B cell (primary cell): ENCODE measurements at regions of chr11 and their contacts with region 1.

Region 1: DNA sequence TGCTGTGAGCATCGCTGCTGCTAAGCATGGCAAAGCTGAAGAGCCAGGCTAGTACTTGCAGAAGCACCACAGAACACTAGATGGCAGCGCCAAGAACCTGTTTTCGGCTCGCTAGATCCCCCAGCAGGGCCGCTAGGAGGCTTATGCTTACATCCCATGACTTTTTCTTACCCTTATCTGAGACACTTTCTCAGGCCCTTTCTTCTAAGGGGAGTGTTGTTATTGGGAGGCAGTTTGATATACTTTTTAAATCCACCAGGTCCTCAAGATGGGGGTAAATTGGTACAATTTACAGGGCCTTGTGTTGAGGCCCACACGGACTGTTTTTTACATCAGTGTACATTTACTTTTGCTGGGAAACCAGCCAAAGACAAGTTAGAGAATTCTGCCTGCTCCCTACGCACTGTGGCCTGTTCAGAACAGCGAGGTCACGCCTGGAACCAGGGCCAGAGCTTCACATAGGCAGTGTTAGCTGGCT is 4.0 kb downstream of the TRIM6 start:
- DNase-seq: peak; percentile 77
- ATAC-seq: peak; percentile 92
- H3K4me3 ChIP-seq: no peak overlapping the region
- H3K4me3 Mint-ChIP-seq: no peak overlapping the region
- H3K27ac ChIP-seq: no peak overlapping the region
- H3K27ac Mint-ChIP-seq: no peak overlapping the region
- H3K4me1 ChIP-seq: peaks cover 9 to 11% of the 10 kb centered on the region in 2 donors
- H3K4me1 Mint-ChIP-seq: peaks cover 16% of the 10 kb centered on the region
- H3K27me3 ChIP-seq: peaks cover 0 to 3% (median 1%) of the 10 kb centered on the region in 4 experiments
- H3K27me3 Mint-ChIP-seq: peaks cover 3% of the 10 kb centered on the region
- CTCF ChIP-seq: peak; percentile 83

Region 2: GRCh38 chr11:5712507-5712906 is 112.1 kb after region 1 on chr11:
- CTCF ChIA-PET with region 1: interaction called, 26 read pairs
- POLR2A ChIA-PET with region 1: no interaction called
- intact Hi-C with region 1: loop called (anchors 1 kb)
- DNase-seq: peak; percentile 48
- ATAC-seq: peak; percentile 39
- H3K4me3 ChIP-seq: no peak overlapping the region
- H3K4me3 Mint-ChIP-seq: no peak overlapping the region
- H3K27ac ChIP-seq: no peak overlapping the region
- H3K27ac Mint-ChIP-seq: peak overlapping the region; percentile 66
- H3K4me1 ChIP-seq: no peaks in the 10 kb centered on the region
- H3K4me1 Mint-ChIP-seq: peaks cover 6% of the 10 kb centered on the region
- H3K27me3 ChIP-seq: no peaks in the 10 kb centered on the region
- H3K27me3 Mint-ChIP-seq: no peaks in the 10 kb centered on the region
- CTCF ChIP-seq: peak; percentile 73

Region 3: GRCh38 chr11:5808500-5809121 is 208.2 kb after region 1 on chr11 and contains the start of gene OR52N2:
- CTCF ChIA-PET with region 1: interaction called, 28 read pairs
- POLR2A ChIA-PET with region 1: no interaction called
- intact Hi-C with region 1: loop called (anchors 1 kb)
- DNase-seq: peak; percentile 84
- ATAC-seq: peak; percentile 91
- H3K4me3 ChIP-seq: peak within 1 kb of the TSS; percentile 52 to 66 (median 64)
- H3K4me3 Mint-ChIP-seq: peak within 1 kb of the TSS; percentile 91
- H3K27ac ChIP-seq: peak within 1 kb of the TSS in 1 of 2 donors; percentile 24
- H3K27ac Mint-ChIP-seq: no peak within 1 kb of the TSS
- H3K4me1 ChIP-seq: peaks cover 10 to 12% of the 10 kb centered on the region in 2 donors
- H3K4me1 Mint-ChIP-seq: peaks cover 12% of the 10 kb centered on the region
- H3K27me3 ChIP-seq: peaks cover 0 to 11% (median 9%) of the 10 kb centered on the region in 4 experiments
- H3K27me3 Mint-ChIP-seq: peaks cover 39% of the 10 kb centered on the region
- CTCF ChIP-seq: peak; percentile 93
- total RNA-seq, gene OR52N2: not detected in 2 replicates

Region 4: DNA sequence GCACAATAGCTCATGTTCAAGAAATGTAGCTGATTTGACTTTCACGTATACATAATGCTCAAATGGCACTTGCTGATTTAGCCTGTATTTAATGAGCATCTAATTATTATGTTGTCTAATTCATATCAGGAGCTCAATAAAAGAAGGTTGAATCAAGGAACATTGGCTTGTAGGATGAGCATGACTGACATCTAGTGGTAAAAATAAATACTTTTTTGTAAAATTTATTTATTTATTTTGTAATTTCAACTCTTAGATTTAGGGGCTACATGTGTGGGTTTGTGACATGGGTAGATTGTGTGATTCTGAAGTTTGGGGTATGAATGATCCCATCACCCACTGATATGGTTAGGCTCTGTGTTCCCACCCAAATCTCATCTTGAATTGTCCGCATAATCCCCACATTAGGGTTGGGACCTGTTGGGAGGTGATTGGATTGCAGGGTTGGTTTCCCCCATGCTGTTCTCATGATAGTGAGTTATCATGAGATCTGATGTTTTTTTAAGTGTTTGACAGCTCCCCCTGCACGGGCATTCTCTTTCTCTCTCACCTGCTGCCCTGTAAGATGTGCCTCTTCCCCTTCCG is 290.9 kb after region 1 on chr11:
- CTCF ChIA-PET with region 1: interaction called, 4 read pairs
- POLR2A ChIA-PET with region 1: no interaction called
- intact Hi-C with region 1: loop called (anchors 10 kb)
- DNase-seq: peak; percentile 20
- ATAC-seq: no peak
- H3K4me3 ChIP-seq: no peak overlapping the region
- H3K4me3 Mint-ChIP-seq: no peak overlapping the region
- H3K27ac ChIP-seq: no peak overlapping the region
- H3K27ac Mint-ChIP-seq: no peak overlapping the region
- H3K4me1 ChIP-seq: no peaks in the 10 kb centered on the region
- H3K4me1 Mint-ChIP-seq: no peaks in the 10 kb centered on the region
- H3K27me3 ChIP-seq: peaks cover 0 to 3% (median 0%) of the 10 kb centered on the region in 4 experiments
- H3K27me3 Mint-ChIP-seq: peaks cover 7% of the 10 kb centered on the region
- CTCF ChIP-seq: peak; percentile 72

Region 5: GRCh38 chr11:6353367-6353987 is 753.1 kb after region 1 on chr11:
- CTCF ChIA-PET with region 1: interaction called, 3 read pairs
- POLR2A ChIA-PET with region 1: no interaction called
- intact Hi-C with region 1: loop called (anchors 10 kb)
- DNase-seq: peak; percentile 71
- ATAC-seq: peak; percentile 64
- H3K4me3 ChIP-seq: no peak overlapping the region
- H3K4me3 Mint-ChIP-seq: no peak overlapping the region
- H3K27ac ChIP-seq: no peak overlapping the region
- H3K27ac Mint-ChIP-seq: no peak overlapping the region
- H3K4me1 ChIP-seq: peaks cover 0 to 6% of the 10 kb centered on the region in 2 donors
- H3K4me1 Mint-ChIP-seq: no peaks in the 10 kb centered on the region
- H3K27me3 ChIP-seq: peaks cover 0 to 5% (median 0%) of the 10 kb centered on the region in 4 experiments
- H3K27me3 Mint-ChIP-seq: no peaks in the 10 kb centered on the region
- CTCF ChIP-seq: peak; percentile 98